Colonic mucosa (tissue), 4 donors: ENCODE measurements at regions of chr10 and their contacts with region 1.

Region 1: DNA sequence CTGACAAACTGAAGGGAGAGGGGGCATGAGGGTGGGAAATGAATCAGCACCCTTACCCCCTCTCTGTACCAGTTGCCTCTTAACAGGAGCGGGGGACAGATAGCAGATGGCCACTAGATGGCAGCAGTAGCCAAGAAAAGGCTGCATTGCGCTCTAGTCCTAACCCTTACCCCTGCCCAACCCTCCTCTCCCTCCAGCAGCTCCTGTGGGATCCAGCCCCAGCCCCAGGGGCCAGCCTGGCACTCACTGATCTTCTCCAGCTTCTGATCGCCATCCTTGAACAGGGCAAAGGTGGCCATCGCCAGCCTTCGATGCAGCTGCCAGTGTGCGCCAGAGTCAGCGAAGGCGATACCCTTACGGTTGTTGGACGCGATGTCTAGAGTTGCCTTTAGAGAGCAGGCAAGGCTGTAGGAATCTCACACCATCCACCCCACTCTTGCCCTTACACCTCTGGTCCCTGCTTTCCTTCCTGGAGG is 2.2 kb downstream of the CYP17A1 start:
- DNase-seq: peak; percentile 80
- H3K4me3 ChIP-seq: no peak overlapping the region
- H3K27ac ChIP-seq: no peak overlapping the region
- H3K4me1 ChIP-seq: peaks cover 3% of the 10 kb centered on the region
- H3K27me3 ChIP-seq: no peaks in the 10 kb centered on the region
- CTCF ChIP-seq: peak; percentile 79

Region 2: DNA sequence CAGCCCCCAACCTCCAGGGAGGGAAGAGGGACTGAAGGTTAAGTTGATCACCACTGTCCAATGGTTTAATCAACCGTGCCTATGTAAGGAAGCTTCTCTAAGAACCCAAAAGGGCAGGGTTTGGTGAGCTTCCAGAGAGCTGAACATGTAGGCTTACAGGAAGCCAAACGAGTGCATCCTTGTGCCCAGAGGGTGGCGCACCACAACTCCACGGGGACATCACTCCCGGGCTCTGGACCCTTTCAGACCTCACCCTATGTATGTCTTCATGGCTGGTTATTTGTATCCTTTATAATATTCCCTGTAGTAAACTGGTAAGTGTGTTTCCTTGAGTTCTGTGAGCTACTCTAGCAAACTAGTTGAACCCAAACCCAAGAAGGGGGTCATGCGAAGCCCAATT is 451.0 kb before region 1 on chr10:
- intact Hi-C with region 1: no loop called
- DNase-seq: no peak
- H3K4me3 ChIP-seq: no peak overlapping the region
- H3K27ac ChIP-seq: no peak overlapping the region
- H3K4me1 ChIP-seq: no peaks in the 10 kb centered on the region
- H3K27me3 ChIP-seq: no peaks in the 10 kb centered on the region
- CTCF ChIP-seq: no peak

Region 3: DNA sequence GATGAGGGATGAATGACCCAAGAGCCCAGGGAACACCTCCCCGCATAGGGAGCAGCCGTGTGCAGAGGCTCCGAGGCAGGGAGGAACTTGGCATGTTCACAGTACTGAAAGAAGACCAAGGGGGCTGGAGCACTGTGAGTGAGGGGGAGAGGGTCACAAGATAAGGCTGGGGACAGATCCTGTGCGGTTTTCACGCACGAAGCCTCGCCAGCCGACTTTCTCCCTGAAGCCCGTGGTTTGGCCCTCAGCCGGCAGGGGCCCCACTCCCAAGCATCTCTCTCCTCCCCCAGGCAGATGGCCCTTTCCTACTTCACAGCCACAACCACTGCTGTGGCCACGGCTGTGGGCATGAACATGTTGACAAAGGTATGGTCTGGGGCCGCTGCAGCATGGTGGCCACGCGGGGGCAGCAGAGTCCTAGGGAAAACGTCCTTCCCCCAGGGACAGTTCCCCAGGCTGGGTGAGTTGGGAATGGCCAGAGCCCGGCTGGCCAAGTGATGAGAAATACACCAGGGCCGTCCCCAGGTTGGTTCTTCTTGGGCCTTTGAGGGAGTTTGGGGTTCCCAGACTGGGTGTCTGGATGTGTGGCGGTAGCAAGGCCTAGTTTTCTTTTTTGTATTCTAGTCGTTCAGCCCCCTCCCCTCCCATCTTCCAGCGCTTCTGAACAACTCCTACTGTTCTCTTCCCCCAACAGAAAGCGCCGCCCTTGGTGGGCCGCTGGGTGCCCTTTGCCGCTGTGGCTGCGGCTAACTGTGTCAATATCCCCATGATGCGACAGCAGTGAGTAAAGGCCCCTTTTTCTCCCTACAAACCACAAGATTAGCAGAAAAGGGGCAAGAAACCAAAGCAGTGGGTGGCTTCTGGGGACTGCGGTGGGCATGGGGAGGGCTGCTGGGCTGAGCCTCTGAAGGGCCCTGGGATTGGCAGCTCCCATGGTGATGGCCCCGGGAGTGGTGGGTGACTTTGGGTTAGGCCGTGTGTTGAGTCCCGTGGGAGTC is 105.7 kb before region 1 on chr10:
- intact Hi-C with region 1: loop called (anchors 5 kb)
- DNase-seq: peak; percentile 84
- H3K4me3 ChIP-seq: no peak overlapping the region
- H3K27ac ChIP-seq: no peak overlapping the region
- H3K4me1 ChIP-seq: no peaks in the 10 kb centered on the region
- H3K27me3 ChIP-seq: no peaks in the 10 kb centered on the region
- CTCF ChIP-seq: peak; percentile 86

Region 4: GRCh38 chr10:102904346-102904745 is 69.3 kb after region 1 on chr10:
- intact Hi-C with region 1: loop called (anchors 2 kb)
- DNase-seq: no peak
- H3K4me3 ChIP-seq: no peak overlapping the region
- H3K27ac ChIP-seq: no peak overlapping the region
- H3K4me1 ChIP-seq: no peaks in the 10 kb centered on the region
- H3K27me3 ChIP-seq: no peaks in the 10 kb centered on the region
- CTCF ChIP-seq: no peak

Region 5: GRCh38 chr10:102962951-102963755 is 128.1 kb after region 1 on chr10:
- intact Hi-C with region 1: no loop called
- DNase-seq: no peak
- H3K4me3 ChIP-seq: no peak overlapping the region
- H3K27ac ChIP-seq: no peak overlapping the region
- H3K4me1 ChIP-seq: no peaks in the 10 kb centered on the region
- H3K27me3 ChIP-seq: no peaks in the 10 kb centered on the region
- CTCF ChIP-seq: no peak

Region 6: DNA sequence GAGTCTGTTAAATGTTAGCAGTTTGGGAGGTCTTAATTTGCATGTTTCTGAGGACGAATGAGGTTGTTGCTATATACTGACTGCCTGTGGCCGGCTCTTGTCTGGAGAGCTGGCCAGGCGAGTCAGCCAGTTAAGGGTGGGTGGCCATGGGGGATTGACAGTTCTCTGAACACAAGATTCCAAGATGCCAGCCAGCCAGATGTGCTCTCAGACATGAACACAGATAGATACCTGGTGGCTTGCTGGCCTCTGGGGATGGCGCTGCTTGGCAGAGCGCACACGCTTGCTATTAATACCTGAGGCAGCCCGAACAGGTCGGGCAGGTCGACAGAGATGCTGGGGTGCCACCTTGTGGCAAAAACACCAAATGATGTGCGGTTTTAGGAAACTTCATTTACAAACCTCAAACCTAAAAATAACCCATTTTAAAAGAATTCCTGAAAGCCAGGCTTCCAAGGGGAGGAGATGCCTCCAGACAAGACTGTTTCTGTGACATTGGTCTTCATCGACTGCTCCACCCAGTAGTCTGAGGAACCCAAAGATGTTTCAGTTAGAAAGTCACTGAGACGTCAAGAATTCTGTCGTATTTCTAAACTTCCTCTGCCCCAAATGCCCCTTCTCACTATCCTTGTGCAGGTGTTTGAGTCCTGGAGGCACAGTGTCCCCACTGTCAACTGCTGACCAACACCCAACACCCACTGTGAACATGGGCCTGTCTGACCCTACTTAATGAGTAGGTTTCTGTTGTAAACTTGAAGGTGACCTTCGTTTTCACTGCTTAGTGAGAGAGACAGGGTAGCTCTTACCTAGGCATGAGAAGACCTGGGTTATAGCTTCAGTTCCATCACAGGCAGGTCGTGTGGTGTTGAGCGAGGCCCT is 234.6 kb after region 1 on chr10:
- intact Hi-C with region 1: loop called (anchors 5 kb)
- DNase-seq: peak; percentile 69
- H3K4me3 ChIP-seq: no peak overlapping the region
- H3K27ac ChIP-seq: no peak overlapping the region
- H3K4me1 ChIP-seq: no peaks in the 10 kb centered on the region
- H3K27me3 ChIP-seq: no peaks in the 10 kb centered on the region
- CTCF ChIP-seq: peak; percentile 58

Region 7: GRCh38 chr10:103244663-103245271 is 409.7 kb after region 1 on chr10:
- intact Hi-C with region 1: loop called (anchors 5 kb)
- DNase-seq: peak; percentile 82
- H3K4me3 ChIP-seq: no peak overlapping the region
- H3K27ac ChIP-seq: no peak overlapping the region
- H3K4me1 ChIP-seq: peaks cover 14% of the 10 kb centered on the region
- H3K27me3 ChIP-seq: no peaks in the 10 kb centered on the region
- CTCF ChIP-seq: peak; percentile 73